CD4-positive, alpha-beta memory T cell (primary cell): ENCODE measurements at regions of chr1 and their contacts with region 1.

Region 1: GRCh38 chr1:206575165-206575893 is 36.9 kb downstream of the EIF2D start:
- DNase-seq: peak; percentile 80 to 87 (median 82)
- H3K4me3 ChIP-seq: peak overlapping the region; percentile 21 to 35
- H3K4me3 Mint-ChIP-seq: peak overlapping the region; percentile 63 to 85 (median 77)
- H3K27ac ChIP-seq: peak overlapping the region; percentile 89
- H3K27ac Mint-ChIP-seq: peak overlapping the region; percentile 93 to 99 (median 97)
- H3K4me1 ChIP-seq: peaks cover 100% of the 10 kb centered on the region
- H3K4me1 Mint-ChIP-seq: peaks cover 84 to 100% (median 95%) of the 10 kb centered on the region in 4 donors
- H3K27me3 ChIP-seq: no peaks in the 10 kb centered on the region
- H3K27me3 Mint-ChIP-seq: no peaks in the 10 kb centered on the region

Region 2: DNA sequence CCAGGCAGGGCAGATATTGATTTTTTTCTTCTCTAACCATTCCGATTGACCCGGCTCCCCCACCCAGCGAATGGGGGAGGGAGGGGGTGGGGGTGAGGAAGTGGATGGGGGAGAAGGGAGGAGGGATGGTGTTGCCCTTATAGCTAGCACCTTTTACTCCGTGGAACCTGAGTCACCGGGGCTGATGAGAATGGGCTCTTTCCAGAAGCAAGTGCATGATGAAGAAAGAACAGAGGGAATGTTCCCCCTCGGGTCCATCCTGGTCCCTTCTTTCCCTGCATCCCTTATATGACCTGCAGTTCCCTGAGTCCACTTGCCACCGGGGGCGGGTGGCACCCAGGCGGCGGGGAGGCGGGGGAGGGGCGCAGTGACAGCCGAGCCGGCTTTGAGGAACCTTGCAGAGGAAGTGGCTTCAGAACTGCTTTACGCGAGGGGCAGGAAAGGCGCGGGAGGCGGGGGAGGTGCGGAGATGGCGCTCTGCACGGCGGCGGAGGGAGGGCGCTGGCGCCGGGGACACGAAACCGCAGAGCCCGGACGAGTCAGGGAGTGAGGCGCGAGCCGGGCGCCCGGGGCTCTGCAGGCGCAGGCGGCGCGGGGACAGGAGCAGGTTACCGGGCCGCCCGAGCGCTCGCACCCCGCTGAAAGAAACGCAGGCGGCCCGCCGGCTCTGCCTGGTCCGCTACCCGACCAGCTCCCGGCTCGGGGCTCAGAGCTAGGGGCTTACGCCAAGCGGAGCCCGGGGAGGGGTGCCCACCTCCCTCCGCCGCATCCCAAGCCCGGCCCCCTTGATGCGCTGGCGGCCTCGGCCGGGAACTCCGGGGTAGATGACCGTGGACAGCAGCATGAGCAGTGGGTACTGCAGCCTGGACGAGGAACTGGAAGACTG is 18.3 kb before region 1 on chr1:
- CTCF ChIA-PET with region 1: interaction called, 228 read pairs
- POLR2A ChIA-PET with region 1: interaction called, 786 read pairs
- intact Hi-C with region 1: loop called (anchors 1 kb)
- DNase-seq: peak; percentile 87 to 93 (median 90)
- H3K4me3 ChIP-seq: peak overlapping the region; percentile 95 to 96
- H3K4me3 Mint-ChIP-seq: peak overlapping the region; percentile 90 to 99 (median 98)
- H3K27ac ChIP-seq: peak overlapping the region; percentile 77
- H3K27ac Mint-ChIP-seq: peak overlapping the region; percentile 93 to 98 (median 96)
- H3K4me1 ChIP-seq: peaks cover 76% of the 10 kb centered on the region
- H3K4me1 Mint-ChIP-seq: peaks cover 49 to 93% (median 63%) of the 10 kb centered on the region in 4 donors
- H3K27me3 ChIP-seq: no peaks in the 10 kb centered on the region
- H3K27me3 Mint-ChIP-seq: no peaks in the 10 kb centered on the region

Region 3: GRCh38 chr1:206563367-206564207 is 11.7 kb before region 1 on chr1:
- CTCF ChIA-PET with region 1: interaction called, 226 read pairs
- POLR2A ChIA-PET with region 1: interaction called, 786 read pairs
- intact Hi-C with region 1: loop called (anchors 1 kb)
- DNase-seq: no peak
- H3K4me3 ChIP-seq: peak overlapping the region; percentile 24 to 46
- H3K4me3 Mint-ChIP-seq: peak overlapping the region; percentile 73 to 92 (median 84)
- H3K27ac ChIP-seq: peak overlapping the region; percentile 53
- H3K27ac Mint-ChIP-seq: peak overlapping the region; percentile 88 to 94 (median 94)
- H3K4me1 ChIP-seq: peaks cover 95% of the 10 kb centered on the region
- H3K4me1 Mint-ChIP-seq: peaks cover 73 to 99% (median 86%) of the 10 kb centered on the region in 4 donors
- H3K27me3 ChIP-seq: no peaks in the 10 kb centered on the region
- H3K27me3 Mint-ChIP-seq: no peaks in the 10 kb centered on the region

Region 4: GRCh38 chr1:206651958-206652890 is 76.9 kb after region 1 on chr1:
- CTCF ChIA-PET with region 1: no interaction called
- POLR2A ChIA-PET with region 1: no interaction called
- intact Hi-C with region 1: no loop called
- DNase-seq: no peak
- H3K4me3 ChIP-seq: no peak overlapping the region
- H3K4me3 Mint-ChIP-seq: no peak overlapping the region
- H3K27ac ChIP-seq: no peak overlapping the region
- H3K27ac Mint-ChIP-seq: no peak overlapping the region
- H3K4me1 ChIP-seq: no peaks in the 10 kb centered on the region
- H3K4me1 Mint-ChIP-seq: no peaks in the 10 kb centered on the region
- H3K27me3 ChIP-seq: no peaks in the 10 kb centered on the region
- H3K27me3 Mint-ChIP-seq: peaks cover 0 to 3% of the 10 kb centered on the region in 2 donors